ENCODE measurements at regions of chr6 and their contacts with region 1.

Region 1: GRCh38 chr6:136643850-136644596 is 93.8 kb upstream of the MAP7 start:
- DNase-seq: peak; percentile 79
- ATAC-seq: peak; percentile 99
- H3K4me3 ChIP-seq: no peak overlapping the region
- H3K27ac ChIP-seq: no peak overlapping the region
- H3K4me1 ChIP-seq: peaks cover 3 to 9% of the 10 kb centered on the region in 2 experiments; a peak in 3 of 4 replicates
- H3K27me3 ChIP-seq: no peaks in the 10 kb centered on the region
- CTCF ChIP-seq: peak; percentile 91 to 97 (median 91)
- POLR2A ChIP-seq: no peak
- RAD21 ChIP-seq: peak; percentile 95

Region 2: DNA sequence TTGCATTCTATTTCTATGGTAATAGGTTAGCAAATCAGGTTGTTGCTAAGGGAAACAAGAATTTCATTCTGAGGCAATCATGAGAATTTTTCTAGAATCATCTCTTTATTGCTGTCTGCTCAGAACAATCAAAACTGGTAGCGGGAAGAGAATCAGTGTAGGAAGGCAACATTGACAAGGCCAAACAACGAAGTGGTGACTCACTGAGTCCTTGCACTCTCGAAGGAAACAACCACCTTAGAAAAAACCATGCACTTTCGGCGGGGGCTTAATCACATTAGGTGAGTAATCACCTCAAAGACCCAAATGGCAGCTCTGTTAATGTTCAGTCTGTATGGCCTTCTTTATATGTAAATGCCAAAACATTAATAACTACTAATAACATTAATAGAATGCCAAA is 15.0 kb before region 1 on chr6:
- CTCF ChIA-PET with region 1: interaction called, 12 read pairs
- POLR2A ChIA-PET with region 1: no interaction called
- RAD21 ChIA-PET with region 1: interaction called in 1 of 2 experiments, 3 read pairs
- intact Hi-C with region 1: no loop called
- DNase-seq: no peak
- ATAC-seq: no peak
- H3K4me3 ChIP-seq: no peak overlapping the region
- H3K27ac ChIP-seq: no peak overlapping the region
- H3K4me1 ChIP-seq: no peaks in the 10 kb centered on the region
- H3K27me3 ChIP-seq: no peaks in the 10 kb centered on the region
- CTCF ChIP-seq: no peak
- POLR2A ChIP-seq: no peak
- RAD21 ChIP-seq: no peak

Region 3: DNA sequence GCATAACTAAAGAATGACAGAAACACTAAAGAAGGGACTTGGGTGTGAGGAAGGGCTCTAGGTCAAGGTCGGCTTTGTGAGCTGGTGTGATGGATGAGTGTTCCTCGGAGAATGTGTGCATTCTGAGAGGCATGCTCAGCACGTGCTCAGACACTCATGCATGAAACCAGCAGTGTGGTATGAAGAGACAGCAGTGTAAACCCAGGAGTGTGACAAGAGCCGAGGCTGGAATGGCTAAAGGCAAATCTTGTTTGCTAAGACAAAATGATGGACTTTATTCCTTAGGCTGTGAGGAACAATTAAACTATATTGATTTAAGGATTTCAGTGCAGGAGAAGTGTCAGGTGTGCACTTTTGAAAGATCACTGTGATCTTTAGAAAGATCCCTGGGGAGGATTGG is 13.6 kb after region 1 on chr6:
- CTCF ChIA-PET with region 1: interaction called, 15 read pairs
- POLR2A ChIA-PET with region 1: no interaction called
- RAD21 ChIA-PET with region 1: no interaction called
- intact Hi-C with region 1: no loop called
- DNase-seq: no peak
- ATAC-seq: no peak
- H3K4me3 ChIP-seq: no peak overlapping the region
- H3K27ac ChIP-seq: no peak overlapping the region
- H3K4me1 ChIP-seq: no peaks in the 10 kb centered on the region
- H3K27me3 ChIP-seq: no peaks in the 10 kb centered on the region
- CTCF ChIP-seq: no peak
- POLR2A ChIP-seq: no peak
- RAD21 ChIP-seq: no peak

Region 4: GRCh38 chr6:136792410-136793262 is 148.6 kb after region 1 on chr6 and contains the start of gene MAP3K5:
- CTCF ChIA-PET with region 1: interaction called, 158 read pairs
- POLR2A ChIA-PET with region 1: interaction called, 16 read pairs
- RAD21 ChIA-PET with region 1: interaction called, 22 to 29 read pairs
- intact Hi-C with region 1: loop called (anchors 1 kb)
- DNase-seq: peak; percentile 77
- ATAC-seq: peak; percentile 87
- H3K4me3 ChIP-seq: peak within 1 kb of the TSS; percentile 72 to 88
- H3K27ac ChIP-seq: peak within 1 kb of the TSS; percentile 88
- H3K4me1 ChIP-seq: peaks cover 21 to 37% of the 10 kb centered on the region in 2 experiments
- H3K27me3 ChIP-seq: no peaks in the 10 kb centered on the region
- CTCF ChIP-seq: peak; percentile 78 to 92 (median 83)
- POLR2A ChIP-seq: peak; percentile 48
- RAD21 ChIP-seq: peak; percentile 93
- total RNA-seq, gene MAP3K5: 11.8 TPM

Region 5: GRCh38 chr6:136927292-136927691 is 283.3 kb after region 1 on chr6:
- CTCF ChIA-PET with region 1: interaction called, 3 read pairs
- POLR2A ChIA-PET with region 1: no interaction called
- RAD21 ChIA-PET with region 1: no interaction called
- intact Hi-C with region 1: loop called (anchors 1 kb)
- DNase-seq: peak; percentile 7
- ATAC-seq: peak; percentile 85
- H3K4me3 ChIP-seq: no peak overlapping the region
- H3K27ac ChIP-seq: no peak overlapping the region
- H3K4me1 ChIP-seq: no peaks in the 10 kb centered on the region
- H3K27me3 ChIP-seq: no peaks in the 10 kb centered on the region
- CTCF ChIP-seq: peak; percentile 41 to 51 (median 43); a peak in 5 of 6 replicates
- POLR2A ChIP-seq: no peak
- RAD21 ChIP-seq: peak; percentile 66

Region 6: GRCh38 chr6:137013738-137014602 is 369.9 kb after region 1 on chr6:
- CTCF ChIA-PET with region 1: interaction called, 11 read pairs
- POLR2A ChIA-PET with region 1: no interaction called
- RAD21 ChIA-PET with region 1: no interaction called
- intact Hi-C with region 1: no loop called
- DNase-seq: peak; percentile 26
- ATAC-seq: peak; percentile 91
- H3K4me3 ChIP-seq: no peak overlapping the region
- H3K27ac ChIP-seq: no peak overlapping the region
- H3K4me1 ChIP-seq: no peaks in the 10 kb centered on the region
- H3K27me3 ChIP-seq: no peaks in the 10 kb centered on the region
- CTCF ChIP-seq: peak; percentile 59 to 81 (median 68)
- POLR2A ChIP-seq: no peak
- RAD21 ChIP-seq: peak; percentile 83

Measured in HCT116 (cell line).